Panc1 (cell line): ENCODE measurements at regions of chr2 and their contacts with region 1.

Region 1: GRCh38 chr2:219294356-219295351 is 14.5 kb downstream of the PTPRN start:
- DNase-seq: peak; percentile 64
- ATAC-seq: peak; percentile 91
- H3K4me3 ChIP-seq: peak overlapping the region; percentile 47 to 62
- H3K27ac ChIP-seq: peak overlapping the region; percentile 76
- H3K4me1 ChIP-seq: peaks cover 7% of the 10 kb centered on the region; the same call in 1 of the 2 replicates
- H3K27me3 ChIP-seq: no peaks in the 10 kb centered on the region
- CTCF ChIP-seq: peak; percentile 100

Region 2: GRCh38 chr2:218993345-218994315 is 301.0 kb before region 1 on chr2 and contains the start of gene CRYBA2:
- CTCF ChIA-PET with region 1: no interaction called
- POLR2A ChIA-PET with region 1: no interaction called
- in situ Hi-C with region 1: no loop called
- intact Hi-C with region 1: no loop called
- DNase-seq: no peak
- ATAC-seq: no peak
- H3K4me3 ChIP-seq: no peak within 1 kb of the TSS
- H3K27ac ChIP-seq: no peak within 1 kb of the TSS
- H3K4me1 ChIP-seq: 0 out of 2 replicates have a peak, but pooled peaks cover 4% of the 10 kb centered on the region
- H3K27me3 ChIP-seq: peaks cover 2% of the 10 kb centered on the region; the same call in 1 of the 2 replicates
- CTCF ChIP-seq: no peak
- total RNA-seq, gene CRYBA2: not detected

Region 3: GRCh38 chr2:219160186-219161017 is 134.3 kb before region 1 on chr2 and contains the start of gene NHEJ1:
- CTCF ChIA-PET with region 1: no interaction called
- POLR2A ChIA-PET with region 1: no interaction called
- in situ Hi-C with region 1: no loop called
- intact Hi-C with region 1: loop called (anchors 2 kb)
- DNase-seq: peak; percentile 75
- ATAC-seq: peak; percentile 97
- H3K4me3 ChIP-seq: peak within 1 kb of the TSS; percentile 61 to 77
- H3K27ac ChIP-seq: peak within 1 kb of the TSS; percentile 84
- H3K4me1 ChIP-seq: peaks cover 5% of the 10 kb centered on the region
- H3K27me3 ChIP-seq: no peaks in the 10 kb centered on the region
- CTCF ChIP-seq: peak; percentile 98
- total RNA-seq, gene NHEJ1: 18.2 TPM

Region 4: DNA sequence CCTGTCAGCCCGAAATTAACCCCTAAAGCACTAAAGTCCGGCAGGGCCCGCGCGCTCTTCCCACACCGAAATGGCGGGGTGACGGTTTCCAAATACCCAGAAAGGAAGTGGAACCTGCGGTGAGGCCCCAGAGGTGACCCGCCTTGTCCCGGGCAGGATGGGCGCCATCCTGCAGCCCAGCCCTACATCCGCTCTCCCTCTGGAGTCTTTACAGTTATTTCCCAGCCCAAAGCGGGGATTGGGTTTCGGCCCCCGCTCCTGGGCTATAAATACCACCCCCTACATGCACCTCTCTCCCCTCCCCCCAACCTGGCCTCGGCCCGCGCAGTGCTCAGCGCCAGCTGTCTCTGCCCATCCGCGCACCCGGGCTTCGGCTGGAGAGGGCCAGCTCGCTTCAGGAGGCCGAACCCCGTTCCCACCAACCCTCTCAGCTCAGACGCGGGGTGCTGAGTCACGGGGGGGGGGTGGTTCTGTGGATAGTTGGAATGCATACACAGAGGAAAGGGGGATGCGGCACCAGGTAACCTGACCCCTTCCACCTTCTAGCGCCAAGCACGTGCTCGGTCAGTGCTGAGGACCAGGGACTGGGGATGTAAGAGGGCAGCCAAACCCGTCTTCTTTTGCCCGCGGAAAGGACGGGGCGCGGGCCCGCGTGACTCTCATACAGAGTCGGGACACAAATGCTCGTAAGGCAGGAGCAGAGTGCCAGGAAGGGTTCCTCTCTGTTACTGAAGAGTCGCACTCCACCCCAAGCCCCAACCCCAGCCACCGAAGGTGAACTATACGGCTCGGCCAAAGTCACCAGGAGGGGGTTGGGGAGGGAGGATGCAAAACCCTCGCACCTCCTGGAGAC is 41.5 kb before region 1 on chr2 and contains the start of gene TUBA4B:
- CTCF ChIA-PET with region 1: interaction called, 14 read pairs
- POLR2A ChIA-PET with region 1: no interaction called
- in situ Hi-C with region 1: no loop called
- intact Hi-C with region 1: no loop called
- DNase-seq: no peak
- ATAC-seq: peak; percentile 47
- H3K4me3 ChIP-seq: peak within 1 kb of the TSS; percentile 49 to 68
- H3K27ac ChIP-seq: no peak within 1 kb of the TSS
- H3K4me1 ChIP-seq: peaks cover 34% of the 10 kb centered on the region
- H3K27me3 ChIP-seq: peaks cover 8% of the 10 kb centered on the region
- CTCF ChIP-seq: no peak
- total RNA-seq, gene TUBA4B: not detected